Activated CD4-positive, alpha-beta T cell treated with anti-CD3 and anti-CD28 coated beads, Interleukin-2, amount 10 ng/mL, durations not matched to agents 24 days and 14 days (primary cell): ENCODE measurements at regions of chr5 and their contacts with region 1.

Region 1: DNA sequence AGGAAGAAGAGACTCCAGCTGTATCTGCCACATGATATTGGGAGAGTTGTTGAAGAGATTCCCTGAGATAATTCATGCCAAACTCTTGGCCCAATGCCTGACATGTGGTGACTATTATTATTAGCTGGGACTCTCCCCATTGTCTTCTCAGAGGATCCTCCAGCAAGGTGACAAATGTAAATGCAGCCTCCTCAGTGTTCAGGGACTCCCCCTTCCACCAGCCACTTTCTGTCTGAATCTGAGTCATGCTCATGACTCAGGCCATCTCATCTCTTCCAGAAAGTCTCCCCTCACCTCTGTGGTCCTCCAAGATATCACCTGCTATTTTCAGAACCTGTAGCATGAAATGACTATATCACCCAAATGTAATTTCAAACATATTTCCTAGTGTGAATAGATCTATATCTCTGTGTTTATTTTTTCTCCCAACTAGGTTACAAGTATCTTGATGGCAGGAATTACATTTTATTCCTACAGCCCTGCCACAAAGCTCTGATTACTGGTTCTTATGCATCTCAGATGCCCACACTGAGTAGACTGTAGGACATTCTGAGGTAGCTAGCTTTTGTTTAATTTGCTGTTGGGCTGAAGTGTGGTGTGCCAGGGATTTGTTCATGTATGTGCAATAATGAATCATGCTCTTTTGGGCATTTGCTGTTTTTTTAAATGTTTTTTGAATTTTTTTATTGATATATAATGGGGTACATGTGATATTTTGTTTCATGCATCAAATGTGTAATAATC is 126.6 kb upstream of the IL12B start:
- DNase-seq: peak; percentile 82
- H3K4me3 Mint-ChIP-seq: peak overlapping the region; percentile 15
- H3K27ac Mint-ChIP-seq: peak overlapping the region; percentile 81
- H3K4me1 Mint-ChIP-seq: peaks cover 43% of the 10 kb centered on the region
- H3K27me3 Mint-ChIP-seq: peaks cover 61% of the 10 kb centered on the region

Region 2: DNA sequence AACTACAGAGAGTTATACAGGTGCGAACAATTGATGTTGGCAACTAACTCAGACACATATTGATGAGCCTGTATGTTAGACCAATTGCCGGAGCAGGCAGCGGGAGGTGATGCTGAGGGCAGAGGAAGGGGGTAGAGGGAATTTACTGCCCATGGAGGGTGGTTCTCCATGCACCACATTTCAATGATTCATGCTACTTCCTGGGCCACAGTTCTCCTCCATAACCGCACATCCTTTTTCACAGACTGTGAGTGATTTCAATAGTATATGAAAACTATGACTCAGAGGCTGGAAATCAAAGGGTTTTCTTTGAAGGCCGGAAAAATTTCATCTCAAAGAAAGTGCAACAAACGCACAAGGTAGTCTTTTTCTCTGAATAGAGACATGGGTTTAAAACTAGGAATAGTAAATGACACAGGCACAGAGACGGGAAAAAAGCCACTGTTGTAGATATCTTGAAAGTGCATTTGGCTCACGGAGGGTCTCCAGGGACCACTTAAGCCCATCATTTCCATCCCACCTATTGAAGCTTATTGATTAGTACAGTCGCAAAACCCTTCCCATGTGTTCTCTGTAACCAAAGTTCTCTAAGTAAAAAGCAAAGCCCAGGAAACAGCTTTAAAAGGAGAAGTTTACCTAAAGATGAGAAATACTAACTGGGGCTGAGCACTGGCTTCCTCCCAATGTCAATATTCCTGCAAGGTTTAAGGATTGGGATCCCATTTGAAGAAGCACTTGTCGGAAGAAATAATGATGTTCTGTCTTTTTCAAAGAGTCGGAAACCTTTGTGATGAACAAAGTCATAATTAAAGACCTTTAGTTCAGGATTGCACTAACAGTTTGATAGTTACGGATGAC is 1853.3 kb before region 1 on chr5:
- intact Hi-C with region 1: loop called (anchors 5 kb)
- DNase-seq: peak; percentile 92
- H3K4me3 Mint-ChIP-seq: peak overlapping the region; percentile 65
- H3K27ac Mint-ChIP-seq: peak overlapping the region; percentile 88
- H3K4me1 Mint-ChIP-seq: peaks cover 73% of the 10 kb centered on the region
- H3K27me3 Mint-ChIP-seq: no peaks in the 10 kb centered on the region

Region 3: DNA sequence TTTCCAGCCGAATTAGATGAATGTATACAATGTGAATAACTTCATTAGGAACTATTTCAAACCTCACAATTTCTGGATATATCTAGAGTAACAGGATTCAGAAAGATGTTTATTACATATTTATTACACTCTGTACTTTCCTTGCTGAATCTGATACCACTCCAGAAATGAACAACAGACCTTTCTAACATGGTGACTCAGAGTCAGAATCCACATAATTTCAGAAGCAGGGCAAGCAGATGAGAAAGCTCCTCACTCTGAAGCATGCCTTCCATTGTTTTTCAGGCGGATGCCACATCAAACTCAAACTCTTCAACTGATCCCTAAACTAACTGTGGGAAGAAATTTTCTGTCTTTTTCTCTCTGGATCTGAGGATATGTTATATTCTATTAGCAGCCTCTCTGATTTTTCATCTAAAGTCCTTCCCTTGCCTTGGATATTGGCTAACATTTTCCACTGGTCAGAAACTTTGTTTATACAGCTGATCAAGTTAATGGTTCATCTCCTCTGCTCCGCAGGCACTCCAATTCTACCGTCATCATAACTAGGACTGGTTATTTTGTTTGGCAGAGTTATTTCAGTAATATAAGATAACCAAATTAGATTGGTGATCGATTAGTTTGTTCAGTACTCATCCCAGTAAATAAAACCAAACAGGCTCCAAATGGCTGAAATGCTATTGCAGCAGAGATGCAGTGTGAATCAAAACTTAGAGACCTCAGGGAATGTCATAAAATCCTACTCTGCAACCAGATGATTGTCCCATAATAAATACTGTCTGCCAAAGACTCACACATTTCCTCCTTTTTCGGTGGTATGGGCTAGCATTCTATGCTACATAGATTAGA is 913.1 kb before region 1 on chr5:
- intact Hi-C with region 1: loop called (anchors 5 kb)
- DNase-seq: no peak
- H3K4me3 Mint-ChIP-seq: no peak overlapping the region
- H3K27ac Mint-ChIP-seq: no peak overlapping the region
- H3K4me1 Mint-ChIP-seq: peaks cover 14% of the 10 kb centered on the region
- H3K27me3 Mint-ChIP-seq: peaks cover 6% of the 10 kb centered on the region

Region 4: DNA sequence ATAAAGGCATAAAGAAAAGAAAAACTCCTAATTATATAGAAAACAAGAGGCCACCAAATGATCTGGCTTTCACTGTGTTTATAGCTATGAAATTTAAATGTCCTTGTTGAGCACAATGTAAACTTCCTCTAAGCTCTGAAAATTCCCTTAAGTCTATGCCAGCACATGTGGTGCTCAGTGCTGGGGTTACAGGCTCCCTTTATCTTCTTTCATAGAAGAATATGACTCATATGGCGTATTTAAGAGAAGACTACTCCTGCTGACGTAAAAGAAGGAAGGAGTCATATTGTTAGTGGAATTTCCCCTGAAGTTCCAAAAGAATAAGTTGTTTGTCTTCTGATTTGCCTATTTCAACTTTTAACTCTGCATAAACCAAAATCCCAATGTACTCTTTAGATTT is 277.9 kb before region 1 on chr5:
- intact Hi-C with region 1: loop called (anchors 5 kb)
- DNase-seq: no peak
- H3K4me3 Mint-ChIP-seq: peak overlapping the region; percentile 68
- H3K27ac Mint-ChIP-seq: peak overlapping the region; percentile 94
- H3K4me1 Mint-ChIP-seq: peaks cover 60% of the 10 kb centered on the region
- H3K27me3 Mint-ChIP-seq: no peaks in the 10 kb centered on the region

Region 5: GRCh38 chr5:159262859-159263567 is 193.9 kb before region 1 on chr5 and contains the start of gene UBLCP1:
- intact Hi-C with region 1: loop called (anchors 2 kb)
- DNase-seq: peak; percentile 92
- H3K4me3 Mint-ChIP-seq: peak within 1 kb of the TSS; percentile 92
- H3K27ac Mint-ChIP-seq: peak within 1 kb of the TSS; percentile 97
- H3K4me1 Mint-ChIP-seq: peaks cover 24% of the 10 kb centered on the region
- H3K27me3 Mint-ChIP-seq: peaks cover 3% of the 10 kb centered on the region
- total RNA-seq, gene UBLCP1: 30.2 and 31.2 TPM in 2 replicates

Region 6: GRCh38 chr5:159427180-159428012 is 29.5 kb before region 1 on chr5:
- intact Hi-C with region 1: loop called (anchors 1 kb)
- DNase-seq: peak; percentile 59
- H3K4me3 Mint-ChIP-seq: peak overlapping the region; percentile 9
- H3K27ac Mint-ChIP-seq: peak overlapping the region; percentile 8
- H3K4me1 Mint-ChIP-seq: peaks cover 40% of the 10 kb centered on the region
- H3K27me3 Mint-ChIP-seq: peaks cover 23% of the 10 kb centered on the region

Region 7: DNA sequence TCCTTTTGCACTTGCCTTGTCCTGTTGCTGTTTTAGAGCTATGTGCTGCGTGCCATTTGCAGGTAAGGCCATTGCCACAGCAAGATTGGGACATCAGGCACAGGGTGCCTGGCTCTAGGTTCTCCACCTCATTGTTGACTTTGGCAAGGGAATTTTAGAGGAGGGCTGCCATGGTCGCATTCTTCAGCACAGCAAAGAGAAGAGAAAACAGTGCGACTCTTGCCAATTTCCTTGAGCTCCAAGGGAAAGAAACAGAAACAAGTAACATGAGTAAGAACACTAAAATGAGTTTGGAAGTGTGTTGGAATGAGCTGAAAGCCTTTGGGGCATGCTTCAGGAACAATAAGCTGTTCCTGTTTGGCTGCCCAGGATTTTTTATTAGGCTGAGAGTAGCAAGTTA is 61.5 kb after region 1 on chr5:
- intact Hi-C with region 1: no loop called
- DNase-seq: no peak
- H3K4me3 Mint-ChIP-seq: no peak overlapping the region
- H3K27ac Mint-ChIP-seq: no peak overlapping the region
- H3K4me1 Mint-ChIP-seq: peaks cover 4% of the 10 kb centered on the region
- H3K27me3 Mint-ChIP-seq: peaks cover 17% of the 10 kb centered on the region

Region 8: DNA sequence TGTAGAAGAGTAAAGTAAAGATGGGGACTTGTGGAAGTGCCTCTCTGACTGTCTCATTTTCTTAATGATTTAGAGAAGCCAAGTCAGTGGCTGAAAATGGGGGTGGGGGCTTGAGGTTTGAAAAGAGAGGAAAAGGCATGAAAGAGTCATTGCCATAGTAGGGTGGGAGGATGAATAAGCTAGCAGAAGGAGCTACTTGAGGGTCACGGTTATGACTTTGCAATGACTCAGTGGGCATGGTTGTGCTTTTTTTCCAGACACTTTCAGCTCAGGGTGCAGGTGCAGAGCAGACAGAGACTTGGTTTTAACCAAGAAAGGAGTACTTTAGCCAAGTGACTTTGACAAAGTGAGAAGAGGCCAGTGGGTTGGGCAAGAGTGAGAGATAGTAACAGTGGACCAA is 1082.5 kb after region 1 on chr5:
- intact Hi-C with region 1: loop called (anchors 2 kb)
- DNase-seq: peak; percentile 64
- H3K4me3 Mint-ChIP-seq: no peak overlapping the region
- H3K27ac Mint-ChIP-seq: no peak overlapping the region
- H3K4me1 Mint-ChIP-seq: peaks cover 9% of the 10 kb centered on the region
- H3K27me3 Mint-ChIP-seq: no peaks in the 10 kb centered on the region